ENCODE measurements at regions of chr3 and their contacts with region 1.

Region 1: DNA sequence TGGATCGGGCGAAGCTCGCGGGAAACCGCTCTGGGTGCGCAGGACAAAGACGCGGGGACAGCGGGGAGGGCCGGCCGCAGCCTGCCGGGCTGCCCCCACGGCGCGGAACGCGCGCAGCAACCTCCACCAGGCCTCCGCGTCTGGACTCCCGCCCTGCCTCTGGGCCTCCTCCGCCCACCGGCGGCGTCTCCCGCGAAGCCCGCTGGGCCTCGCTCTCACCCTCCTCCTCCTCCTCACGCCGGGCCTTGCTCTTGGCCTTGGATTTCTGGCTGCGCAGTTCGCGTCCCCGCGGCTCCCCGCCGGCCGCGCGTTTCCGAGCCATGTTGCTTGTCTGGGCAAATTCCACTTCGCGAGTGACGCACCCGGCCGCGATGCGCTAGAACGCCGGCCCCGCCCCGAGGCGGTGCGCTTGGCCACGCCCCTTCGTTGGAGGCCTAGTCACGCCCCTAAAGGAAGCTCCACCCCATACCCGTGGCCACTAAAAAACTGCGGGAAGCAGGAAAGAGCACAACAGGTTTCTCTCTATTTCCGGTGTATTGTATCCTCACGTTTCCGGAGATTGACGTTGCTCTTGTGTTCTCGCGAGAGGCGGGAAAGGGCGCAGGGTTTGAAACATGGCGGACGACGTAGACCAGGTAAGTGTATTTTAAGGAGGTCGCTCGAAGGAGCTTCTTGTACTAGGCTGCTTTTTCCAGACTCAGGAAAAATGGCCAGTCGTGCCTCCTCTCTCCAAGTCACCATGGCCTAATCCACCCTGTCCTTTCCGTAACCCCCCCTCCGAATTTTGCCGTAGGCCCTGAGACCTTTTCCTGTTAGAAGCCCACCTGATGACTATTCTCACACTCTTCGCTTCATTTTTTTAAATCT is at the starts of genes LSM3 and XPC:
- DNase-seq: peak; percentile 98 to 100 (median 99)
- ATAC-seq: peak; percentile 98
- H3K4me3 ChIP-seq: peak within 1 kb of the TSS; percentile 68
- H3K4me3 Mint-ChIP-seq: peak within 1 kb of the TSS; percentile 94 to 100 (median 98)
- H3K27ac ChIP-seq: peak within 1 kb of the TSS; percentile 99
- H3K27ac Mint-ChIP-seq: peak within 1 kb of the TSS; percentile 96 to 100 (median 99)
- H3K4me1 ChIP-seq: peaks cover 37 to 48% of the 10 kb centered on the region in 2 donors
- H3K4me1 Mint-ChIP-seq: peaks cover 45 to 85% (median 82%) of the 10 kb centered on the region in 7 donors
- H3K27me3 ChIP-seq: no peaks in the 10 kb centered on the region
- H3K27me3 Mint-ChIP-seq: peaks cover 0 to 2% (median 0%) of the 10 kb centered on the region in 5 donors
- total RNA-seq, gene LSM3: 6.0 to 14.1 (median 8.0) TPM
- total RNA-seq, gene XPC: 56.3 to 94.8 (median 78.1) TPM

Region 2: DNA sequence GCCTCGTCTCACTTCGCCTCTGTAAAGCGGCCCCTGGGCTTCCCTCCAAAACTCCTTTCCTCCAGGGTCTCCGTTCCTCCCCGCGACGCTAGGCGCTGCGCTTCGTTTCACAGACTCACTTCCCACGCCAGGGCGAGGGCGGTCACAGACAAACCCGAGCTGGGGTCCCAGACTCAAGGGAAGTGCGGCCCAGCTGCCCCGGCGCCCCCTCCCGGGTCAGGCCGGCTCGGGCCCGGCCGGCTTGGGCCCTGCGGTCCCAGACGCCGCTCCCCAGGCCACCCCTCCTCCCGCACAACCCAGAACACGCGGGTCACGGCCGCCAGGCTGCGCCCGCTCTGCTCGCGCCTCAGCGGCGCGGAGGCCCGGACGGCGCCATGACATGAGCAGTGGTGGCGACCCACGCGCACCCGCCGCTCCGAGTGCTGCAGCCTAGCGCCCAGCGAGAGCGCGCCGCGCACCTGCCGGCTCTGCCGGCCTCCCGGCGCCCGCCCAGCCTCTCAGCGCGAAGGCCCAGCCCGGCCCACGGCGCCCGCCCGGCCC is 758.9 kb before region 1 on chr3:
- CTCF ChIA-PET with region 1: no interaction called
- POLR2A ChIA-PET with region 1: no interaction called
- intact Hi-C with region 1: loop called in 1 of 2 experiments (anchors 1 kb)
- DNase-seq: peak; percentile 58 to 69 (median 64)
- ATAC-seq: peak; percentile 74
- H3K4me3 ChIP-seq: peak overlapping the region; percentile 70
- H3K4me3 Mint-ChIP-seq: peak overlapping the region; percentile 77 to 100 (median 90)
- H3K27ac ChIP-seq: peak overlapping the region; percentile 96
- H3K27ac Mint-ChIP-seq: peak overlapping the region; percentile 83 to 97 (median 92)
- H3K4me1 ChIP-seq: peaks cover 55 to 60% of the 10 kb centered on the region in 2 donors
- H3K4me1 Mint-ChIP-seq: peaks cover 41 to 81% (median 69%) of the 10 kb centered on the region in 7 donors
- H3K27me3 ChIP-seq: no peaks in the 10 kb centered on the region
- H3K27me3 Mint-ChIP-seq: no peaks in the 10 kb centered on the region

Region 3: GRCh38 chr3:14124615-14125190 is 53.8 kb before region 1 on chr3 and contains the starts of genes CHCHD4 and TMEM43:
- CTCF ChIA-PET with region 1: interaction called, 5 read pairs
- POLR2A ChIA-PET with region 1: interaction called, 92 read pairs
- intact Hi-C with region 1: loop called (anchors 1 kb)
- DNase-seq: peak; percentile 91 to 99 (median 98)
- ATAC-seq: peak; percentile 96
- H3K4me3 ChIP-seq: peak within 1 kb of the TSS; percentile 100
- H3K4me3 Mint-ChIP-seq: peak within 1 kb of the TSS; percentile 93 to 98 (median 96)
- H3K27ac ChIP-seq: peak within 1 kb of the TSS; percentile 89
- H3K27ac Mint-ChIP-seq: peak within 1 kb of the TSS; percentile 87 to 97 (median 94)
- H3K4me1 ChIP-seq: peaks cover 28 to 30% of the 10 kb centered on the region in 2 donors
- H3K4me1 Mint-ChIP-seq: peaks cover 43 to 70% (median 63%) of the 10 kb centered on the region in 7 donors
- H3K27me3 ChIP-seq: no peaks in the 10 kb centered on the region
- H3K27me3 Mint-ChIP-seq: no peaks in the 10 kb centered on the region
- total RNA-seq, gene CHCHD4: 3.3 to 14.1 (median 8.4) TPM
- total RNA-seq, gene TMEM43: 30.1 to 54.8 (median 46.5) TPM

Region 4: GRCh38 chr3:14152242-14152962 is 26.1 kb before region 1 on chr3:
- CTCF ChIA-PET with region 1: no interaction called
- POLR2A ChIA-PET with region 1: interaction called, 36 read pairs
- intact Hi-C with region 1: loop called in 1 of 2 experiments (anchors 2 kb)
- DNase-seq: no peak
- ATAC-seq: peak; percentile 47
- H3K4me3 ChIP-seq: no peak overlapping the region
- H3K4me3 Mint-ChIP-seq: no peak overlapping the region
- H3K27ac ChIP-seq: no peak overlapping the region
- H3K27ac Mint-ChIP-seq: peak overlapping the region in 6 of 9 donors; percentile 25 to 78 (median 62)
- H3K4me1 ChIP-seq: no peaks in the 10 kb centered on the region
- H3K4me1 Mint-ChIP-seq: peaks cover 6 to 27% (median 22%) of the 10 kb centered on the region in 7 donors
- H3K27me3 ChIP-seq: no peaks in the 10 kb centered on the region
- H3K27me3 Mint-ChIP-seq: no peaks in the 10 kb centered on the region

Region 5: DNA sequence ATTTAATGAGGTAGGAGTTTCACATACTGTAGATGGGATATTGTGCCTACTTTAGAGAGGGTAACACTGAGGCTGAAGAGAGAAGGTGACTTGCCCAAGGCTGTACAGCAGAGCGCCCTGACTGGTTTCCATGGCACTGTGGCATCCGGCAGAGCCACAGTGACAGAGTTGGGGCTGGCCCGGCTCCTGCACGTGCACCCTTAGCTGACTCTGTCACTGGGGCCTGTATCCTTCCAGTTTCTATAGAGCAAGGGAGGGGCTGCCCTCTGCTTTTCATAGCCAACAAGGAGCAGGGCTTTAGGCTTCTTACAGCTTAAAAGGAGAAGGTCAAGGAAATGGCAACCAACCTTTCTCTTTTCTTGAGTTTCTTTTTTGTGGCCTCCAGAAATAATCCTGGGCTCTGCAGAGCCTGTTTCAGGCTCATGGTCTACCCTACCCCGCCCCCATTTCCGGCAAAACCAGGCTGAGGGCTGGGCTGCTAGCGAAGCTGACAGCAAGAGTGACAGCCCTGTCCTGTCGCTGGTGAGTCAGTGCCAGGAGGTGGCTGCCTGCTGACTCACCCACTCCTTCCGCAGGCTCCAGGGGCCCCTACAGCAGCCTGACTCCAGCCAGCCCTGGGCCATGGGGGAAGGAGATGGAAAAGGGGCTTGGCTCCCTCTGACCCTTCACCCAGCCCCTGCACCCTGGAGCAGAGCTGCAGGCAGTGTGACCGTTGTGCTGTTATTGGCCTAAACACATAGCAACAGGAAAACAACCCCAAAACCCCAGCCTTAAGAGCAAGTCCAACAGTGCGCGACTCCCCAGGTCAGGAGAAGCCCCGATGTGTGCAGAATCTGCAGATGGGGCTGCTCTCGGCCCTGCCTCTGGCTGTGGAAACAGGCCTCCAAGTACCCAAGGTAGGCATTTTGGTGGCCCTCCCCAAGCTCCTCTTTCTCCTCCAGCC is 253.7 kb after region 1 on chr3:
- CTCF ChIA-PET with region 1: no interaction called
- POLR2A ChIA-PET with region 1: no interaction called
- intact Hi-C with region 1: loop called (anchors 1 kb)
- DNase-seq: peak; percentile 73 to 94 (median 91)
- ATAC-seq: peak; percentile 89
- H3K4me3 ChIP-seq: peak overlapping the region; percentile 53
- H3K4me3 Mint-ChIP-seq: peak overlapping the region; percentile 51 to 90 (median 78)
- H3K27ac ChIP-seq: peak overlapping the region; percentile 84
- H3K27ac Mint-ChIP-seq: peak overlapping the region; percentile 87 to 100 (median 98)
- H3K4me1 ChIP-seq: peaks cover 55 to 81% of the 10 kb centered on the region in 2 donors
- H3K4me1 Mint-ChIP-seq: peaks cover 57 to 85% (median 75%) of the 10 kb centered on the region in 7 donors
- H3K27me3 ChIP-seq: no peaks in the 10 kb centered on the region
- H3K27me3 Mint-ChIP-seq: no peaks in the 10 kb centered on the region

Region 6: GRCh38 chr3:14577897-14578296 is 399.4 kb after region 1 on chr3:
- CTCF ChIA-PET with region 1: no interaction called
- POLR2A ChIA-PET with region 1: no interaction called
- intact Hi-C with region 1: no loop called
- DNase-seq: no peak
- ATAC-seq: no peak
- H3K4me3 ChIP-seq: no peak overlapping the region
- H3K4me3 Mint-ChIP-seq: no peak overlapping the region
- H3K27ac ChIP-seq: no peak overlapping the region
- H3K27ac Mint-ChIP-seq: no peak overlapping the region
- H3K4me1 ChIP-seq: no peaks in the 10 kb centered on the region
- H3K4me1 Mint-ChIP-seq: no peaks in the 10 kb centered on the region
- H3K27me3 ChIP-seq: no peaks in the 10 kb centered on the region
- H3K27me3 Mint-ChIP-seq: peaks cover 0 to 16% (median 12%) of the 10 kb centered on the region in 5 donors

Region 7: GRCh38 chr3:15064835-15065549 is 886.5 kb after region 1 on chr3 and contains the start of gene MRPS25:
- CTCF ChIA-PET with region 1: no interaction called
- POLR2A ChIA-PET with region 1: no interaction called
- intact Hi-C with region 1: loop called in 1 of 2 experiments (anchors 1 kb)
- DNase-seq: peak; percentile 80 to 90 (median 87)
- ATAC-seq: peak; percentile 99
- H3K4me3 ChIP-seq: peak within 1 kb of the TSS; percentile 86
- H3K4me3 Mint-ChIP-seq: peak within 1 kb of the TSS; percentile 94 to 98 (median 96)
- H3K27ac ChIP-seq: peak within 1 kb of the TSS; percentile 87
- H3K27ac Mint-ChIP-seq: peak within 1 kb of the TSS; percentile 87 to 99 (median 94)
- H3K4me1 ChIP-seq: peaks cover 7 to 14% of the 10 kb centered on the region in 2 donors
- H3K4me1 Mint-ChIP-seq: peaks cover 16 to 29% (median 22%) of the 10 kb centered on the region in 7 donors
- H3K27me3 ChIP-seq: no peaks in the 10 kb centered on the region
- H3K27me3 Mint-ChIP-seq: no peaks in the 10 kb centered on the region
- total RNA-seq, gene MRPS25: 57.6 to 104 (median 76.0) TPM

Measured in naive thymus-derived CD4-positive, alpha-beta T cell (primary cell).